ENCODE measurements at regions of chr10 and their contacts with region 1.

Region 1: DNA sequence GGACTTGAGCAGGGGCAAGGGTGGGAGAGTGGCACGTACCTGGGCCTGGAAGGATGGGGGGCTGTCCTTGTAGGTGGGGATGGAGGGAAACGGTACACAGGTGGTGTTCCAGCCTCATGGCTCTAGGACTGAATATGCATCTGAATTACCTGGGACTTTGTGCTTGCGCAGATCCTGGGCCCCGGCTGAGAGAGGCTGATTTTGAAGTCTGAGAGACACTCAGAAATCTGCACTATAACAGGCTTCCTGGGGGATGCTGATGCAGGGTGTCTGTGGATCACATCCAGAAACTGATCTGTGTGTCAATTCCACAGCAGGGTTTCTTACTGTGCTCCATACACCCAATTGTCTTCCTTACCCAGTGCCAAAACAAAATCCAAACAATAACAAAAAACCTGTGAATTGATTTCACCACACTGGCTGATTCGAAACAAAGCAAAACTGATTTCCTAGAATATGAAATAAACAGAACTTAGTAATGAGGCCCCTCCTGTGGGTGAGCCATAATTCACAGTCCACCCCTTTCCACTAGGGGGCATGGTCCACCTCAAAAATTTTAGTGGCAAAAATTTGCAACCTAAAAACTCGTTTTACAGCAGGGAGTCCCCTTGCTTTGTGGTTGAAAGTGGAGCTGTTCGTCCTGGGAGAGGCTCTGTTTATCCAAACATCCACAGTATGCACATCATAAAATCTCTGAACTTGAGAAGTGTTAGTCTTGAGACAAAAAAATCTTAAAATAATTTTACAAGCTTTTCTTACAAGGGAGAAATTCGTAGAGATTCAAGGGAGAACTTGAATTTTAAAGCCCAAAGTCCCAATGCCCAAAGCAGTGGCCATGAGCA is 32.0 kb upstream of the PLEKHA1 start:
- DNase-seq: peak in 1 of 2 experiments; percentile 32
- H3K4me3 ChIP-seq: no peak overlapping the region
- H3K27ac ChIP-seq: no peak overlapping the region
- H3K4me1 ChIP-seq: peaks cover 20% of the 10 kb centered on the region
- H3K27me3 ChIP-seq: no peaks in the 10 kb centered on the region
- CTCF ChIP-seq: peak; percentile 70

Region 2: DNA sequence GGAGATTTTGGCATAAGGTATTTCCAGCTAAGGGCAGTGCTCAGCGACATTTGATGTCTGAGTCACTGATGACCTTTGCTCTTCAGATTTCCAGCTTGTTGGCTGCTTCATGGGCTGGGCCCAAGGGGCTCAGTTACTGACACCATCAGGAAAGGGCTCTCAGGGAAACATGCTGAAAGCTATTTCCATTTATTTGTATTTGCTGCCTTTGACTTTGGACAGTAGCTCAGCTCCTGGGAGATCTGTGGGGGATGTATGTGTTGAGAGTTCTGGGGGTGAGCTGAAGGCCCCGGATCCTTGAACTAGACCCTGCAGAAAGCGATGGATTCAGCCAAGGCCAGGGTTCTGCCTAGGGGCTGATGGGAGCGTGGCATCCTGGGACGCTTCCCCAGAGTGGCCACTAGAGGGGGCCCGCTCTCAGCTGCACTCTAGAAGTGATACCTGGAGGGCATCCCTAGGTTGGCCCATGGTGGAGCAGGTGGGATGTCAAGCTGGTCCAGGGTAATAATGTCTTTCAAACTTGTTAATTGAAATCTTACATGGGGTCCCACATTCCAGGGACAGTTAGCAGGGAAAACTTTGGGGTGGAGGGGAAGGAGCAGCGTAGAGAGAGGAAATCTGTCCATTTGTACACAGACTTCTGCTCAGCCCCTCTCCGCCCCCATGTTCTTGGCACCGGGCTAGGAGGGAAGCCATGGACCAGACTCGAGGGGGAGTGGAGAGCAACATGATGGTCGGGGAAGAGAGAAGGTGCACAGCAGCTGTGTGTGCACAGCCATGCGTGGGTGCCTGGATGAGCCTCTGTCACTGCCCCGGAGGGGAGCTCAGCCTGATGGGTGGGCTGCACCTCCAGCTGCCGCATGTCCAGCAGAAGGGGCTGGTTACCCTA is 74.4 kb before region 1 on chr10:
- CTCF ChIA-PET with region 1: no interaction called
- POLR2A ChIA-PET with region 1: no interaction called
- intact Hi-C with region 1: no loop called
- DNase-seq: peak; percentile 36 to 38
- H3K4me3 ChIP-seq: no peak overlapping the region
- H3K27ac ChIP-seq: 0 out of 2 replicates have a peak overlapping the region, but pooled peaks have one; percentile 6
- H3K4me1 ChIP-seq: peaks cover 25% of the 10 kb centered on the region
- H3K27me3 ChIP-seq: no peaks in the 10 kb centered on the region
- CTCF ChIP-seq: peak; percentile 85

Region 3: DNA sequence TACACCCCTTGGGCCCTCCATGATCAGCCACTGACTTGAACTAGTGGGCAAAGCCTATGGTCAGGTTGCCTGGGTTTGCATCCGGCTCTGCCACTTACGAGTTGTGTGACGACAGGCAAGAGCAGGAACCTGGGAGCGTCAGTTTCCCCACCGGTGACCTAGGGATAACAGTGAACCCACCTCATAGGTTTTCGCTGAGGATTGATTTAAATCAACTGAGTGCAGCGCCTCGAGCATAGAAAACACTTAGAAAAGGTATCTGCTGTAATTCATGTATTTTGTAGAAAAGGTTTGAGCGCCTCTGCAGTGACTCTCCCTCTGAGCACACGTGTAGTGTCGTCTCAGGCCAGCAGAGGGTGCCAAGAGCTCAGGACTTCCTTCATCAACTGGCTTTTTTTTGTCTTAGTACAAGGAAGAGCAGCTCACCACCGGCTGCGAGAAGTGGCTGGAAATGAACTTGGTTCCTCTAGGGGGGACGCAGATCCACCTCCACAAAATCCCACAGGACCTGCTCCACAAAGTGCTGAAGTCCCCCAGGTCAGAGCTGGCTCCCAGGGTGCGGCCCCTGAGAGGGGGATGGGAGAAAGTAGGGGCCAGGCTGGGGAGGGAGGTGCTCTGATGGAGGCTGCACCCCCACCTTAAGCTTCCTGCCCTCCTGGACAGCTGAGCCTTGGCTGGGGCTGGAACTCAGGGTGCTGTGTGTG is 43.8 kb before region 1 on chr10:
- CTCF ChIA-PET with region 1: interaction called, 3 read pairs
- POLR2A ChIA-PET with region 1: no interaction called
- intact Hi-C with region 1: loop called (anchors 2 kb)
- DNase-seq: peak; percentile 56 to 65
- H3K4me3 ChIP-seq: no peak overlapping the region; the same call in 1 of the 2 replicates
- H3K27ac ChIP-seq: no peak overlapping the region
- H3K4me1 ChIP-seq: peaks cover 19% of the 10 kb centered on the region
- H3K27me3 ChIP-seq: no peaks in the 10 kb centered on the region
- CTCF ChIP-seq: peak; percentile 84

Region 4: GRCh38 chr10:122374237-122374869 is 31.8 kb after region 1 on chr10 and contains the start of gene PLEKHA1:
- CTCF ChIA-PET with region 1: no interaction called
- POLR2A ChIA-PET with region 1: interaction called, 4 read pairs
- intact Hi-C with region 1: loop called (anchors 1 kb)
- DNase-seq: peak; percentile 79 to 91
- H3K4me3 ChIP-seq: peak within 1 kb of the TSS; percentile 62
- H3K27ac ChIP-seq: peak within 1 kb of the TSS; percentile 50
- H3K4me1 ChIP-seq: peaks cover 18% of the 10 kb centered on the region
- H3K27me3 ChIP-seq: no peaks in the 10 kb centered on the region
- CTCF ChIP-seq: no peak; the same call in 1 of the 2 replicates
- total RNA-seq, gene PLEKHA1: 33.8 and 39.9 TPM in 2 replicates

Region 5: GRCh38 chr10:122419876-122420623 is 77.5 kb after region 1 on chr10:
- CTCF ChIA-PET with region 1: no interaction called
- POLR2A ChIA-PET with region 1: no interaction called
- intact Hi-C with region 1: loop called (anchors 5 kb)
- DNase-seq: no peak
- H3K4me3 ChIP-seq: no peak overlapping the region
- H3K27ac ChIP-seq: no peak overlapping the region
- H3K4me1 ChIP-seq: no peaks in the 10 kb centered on the region
- H3K27me3 ChIP-seq: no peaks in the 10 kb centered on the region
- CTCF ChIP-seq: no peak

Region 6: DNA sequence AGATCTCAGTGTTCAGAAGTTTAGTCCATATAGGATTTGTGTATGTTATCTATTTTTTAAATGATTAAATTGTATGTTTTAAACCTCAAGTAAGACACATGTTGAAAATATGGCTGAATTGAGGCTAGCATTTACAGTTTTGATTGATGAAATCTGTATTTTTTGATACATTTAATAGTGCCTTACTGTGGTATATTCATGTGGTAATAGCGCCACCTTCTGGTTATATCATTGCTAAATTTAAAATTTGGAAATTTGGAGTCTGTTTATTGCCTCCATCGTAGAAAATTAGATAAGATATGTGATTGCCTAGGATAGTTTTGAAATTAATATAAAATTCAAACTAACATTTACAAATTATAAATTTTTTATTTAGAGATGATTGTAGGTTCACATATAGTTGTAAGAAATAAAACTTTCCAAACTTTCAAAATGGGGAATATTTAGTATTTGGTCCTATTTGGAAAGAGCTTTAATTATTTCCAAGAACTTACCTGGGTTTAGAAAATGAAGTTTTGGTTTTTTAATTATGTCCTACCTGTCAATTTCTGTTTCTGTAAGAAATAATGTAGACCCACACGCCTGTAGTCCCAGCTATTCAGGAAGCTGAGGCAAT is 92.8 kb after region 1 on chr10:
- CTCF ChIA-PET with region 1: no interaction called
- POLR2A ChIA-PET with region 1: no interaction called
- intact Hi-C with region 1: loop called (anchors 1 kb)
- DNase-seq: peak in 1 of 2 experiments; percentile 38
- H3K4me3 ChIP-seq: no peak overlapping the region
- H3K27ac ChIP-seq: no peak overlapping the region
- H3K4me1 ChIP-seq: no peaks in the 10 kb centered on the region
- H3K27me3 ChIP-seq: no peaks in the 10 kb centered on the region
- CTCF ChIP-seq: peak; percentile 83

Region 7: GRCh38 chr10:122468926-122469781 is 126.6 kb after region 1 on chr10:
- CTCF ChIA-PET with region 1: no interaction called
- POLR2A ChIA-PET with region 1: no interaction called
- intact Hi-C with region 1: no loop called
- DNase-seq: peak in 1 of 2 experiments; percentile 50
- H3K4me3 ChIP-seq: no peak overlapping the region
- H3K27ac ChIP-seq: no peak overlapping the region
- H3K4me1 ChIP-seq: 0 out of 2 replicates have a peak, but pooled peaks cover 5% of the 10 kb centered on the region
- H3K27me3 ChIP-seq: peaks cover 4% of the 10 kb centered on the region; the same call in 1 of the 2 replicates
- CTCF ChIP-seq: no peak

Region 8: DNA sequence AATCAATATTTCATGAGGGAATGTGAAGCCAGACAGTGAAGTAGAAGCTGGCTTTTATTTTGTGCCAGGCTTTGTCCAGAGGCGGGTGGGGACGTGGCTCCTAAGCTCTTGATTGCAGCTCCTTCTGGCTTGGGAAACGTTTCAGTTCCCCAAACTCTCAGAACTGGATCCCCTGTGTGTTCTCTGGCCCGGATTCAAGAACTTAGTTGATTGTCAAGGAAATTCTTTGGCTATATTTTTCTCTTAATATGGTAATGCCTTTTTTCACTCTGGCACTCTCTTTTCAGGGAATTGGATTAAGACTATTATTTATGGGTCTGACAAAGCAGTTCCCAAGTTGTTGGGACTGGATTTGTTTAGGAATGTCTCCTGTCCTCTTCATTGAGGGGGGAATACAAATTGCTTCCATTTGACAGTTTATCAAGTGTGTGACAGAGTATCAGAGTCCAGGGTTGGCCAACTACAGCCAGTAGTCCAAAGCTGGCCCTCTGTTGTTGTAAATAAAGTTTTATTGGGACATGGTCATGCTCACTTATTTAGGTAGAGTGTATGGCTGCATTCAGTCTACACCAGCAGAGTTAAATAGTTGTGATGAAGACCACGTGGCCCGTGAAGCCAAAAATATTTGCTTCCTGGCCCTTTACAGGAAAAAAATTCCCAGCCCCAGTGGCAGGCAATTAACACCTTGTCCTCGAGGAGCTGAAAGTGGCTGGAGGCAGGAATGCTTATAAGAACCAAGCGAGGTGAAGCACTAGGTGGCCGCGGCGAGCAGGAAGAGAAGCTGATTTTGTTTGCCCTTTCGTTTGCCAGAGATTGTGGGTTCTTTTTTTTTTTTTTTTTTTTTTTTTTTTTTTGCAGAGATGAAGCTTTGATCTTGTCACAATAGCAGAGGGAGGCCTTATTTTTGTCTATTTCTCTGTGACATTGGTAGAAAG is 153.2 kb after region 1 on chr10:
- CTCF ChIA-PET with region 1: no interaction called
- POLR2A ChIA-PET with region 1: interaction called, 23 read pairs
- intact Hi-C with region 1: no loop called
- DNase-seq: no peak
- H3K4me3 ChIP-seq: no peak overlapping the region
- H3K27ac ChIP-seq: no peak overlapping the region
- H3K4me1 ChIP-seq: peaks cover 10% of the 10 kb centered on the region
- H3K27me3 ChIP-seq: no peaks in the 10 kb centered on the region
- CTCF ChIP-seq: no peak